CD8-positive, alpha-beta T cell (primary cell): ENCODE measurements at regions of chr18 and their contacts with region 1.

Region 1: DNA sequence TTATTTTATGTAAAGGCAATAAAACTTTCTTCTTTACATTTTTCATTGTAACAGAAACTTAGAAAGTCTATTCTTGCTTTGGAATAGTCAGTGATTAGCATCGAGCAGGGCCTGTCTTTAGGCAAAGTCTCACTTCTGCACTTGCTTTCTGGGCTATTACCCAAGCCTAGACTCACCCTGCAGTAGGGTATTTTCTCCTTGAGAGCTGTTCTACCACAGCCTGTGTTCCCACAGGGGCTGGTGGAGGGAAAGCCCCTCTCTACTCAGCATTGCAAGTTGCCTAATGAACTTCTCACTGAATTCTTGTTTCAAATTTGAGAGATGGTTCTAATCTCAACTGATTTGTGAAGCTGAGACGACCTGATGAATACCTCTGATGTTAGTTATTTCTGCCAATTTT is 111.7 kb upstream of the KLHL14 start:
- DNase-seq: peak in 1 of 9 experiments; percentile 12
- ATAC-seq: no peak
- H3K4me3 ChIP-seq: no peak overlapping the region
- H3K4me3 Mint-ChIP-seq: no peak overlapping the region
- H3K27ac ChIP-seq: no peak overlapping the region
- H3K27ac Mint-ChIP-seq: no peak overlapping the region
- H3K4me1 ChIP-seq: no peaks in the 10 kb centered on the region
- H3K4me1 Mint-ChIP-seq: no peaks in the 10 kb centered on the region
- H3K27me3 ChIP-seq: no peaks in the 10 kb centered on the region
- H3K27me3 Mint-ChIP-seq: no peaks in the 10 kb centered on the region
- CTCF ChIP-seq: no peak

Region 2: GRCh38 chr18:32937007-32937540 is 52.5 kb after region 1 on chr18:
- CTCF ChIA-PET with region 1: no interaction called
- POLR2A ChIA-PET with region 1: no interaction called
- intact Hi-C with region 1: loop called in 1 of 2 experiments (anchors 10 kb)
- DNase-seq: no peak
- ATAC-seq: no peak
- H3K4me3 ChIP-seq: no peak overlapping the region
- H3K4me3 Mint-ChIP-seq: no peak overlapping the region
- H3K27ac ChIP-seq: no peak overlapping the region
- H3K27ac Mint-ChIP-seq: no peak overlapping the region
- H3K4me1 ChIP-seq: no peaks in the 10 kb centered on the region
- H3K4me1 Mint-ChIP-seq: no peaks in the 10 kb centered on the region
- H3K27me3 ChIP-seq: no peaks in the 10 kb centered on the region
- H3K27me3 Mint-ChIP-seq: no peaks in the 10 kb centered on the region
- CTCF ChIP-seq: no peak

Region 3: DNA sequence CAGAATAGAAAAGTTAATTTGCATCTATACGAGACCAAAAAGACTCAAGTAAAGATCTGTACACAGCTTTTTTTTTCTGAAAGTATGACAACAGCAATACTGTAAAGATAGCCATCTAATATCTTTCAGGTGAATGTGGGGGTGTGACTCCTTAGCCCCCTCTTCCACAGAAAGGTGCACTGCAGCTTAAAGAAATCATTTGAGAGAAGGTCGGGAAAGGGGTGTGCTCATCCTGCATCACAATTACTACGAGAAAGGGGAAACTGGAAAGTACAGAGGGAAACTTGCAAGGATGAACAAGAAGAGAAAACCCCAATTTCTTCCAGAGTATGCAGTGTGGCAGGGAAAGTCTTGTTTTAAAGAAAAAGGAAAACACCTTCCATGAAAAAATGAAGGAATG is 300.4 kb after region 1 on chr18:
- CTCF ChIA-PET with region 1: no interaction called
- POLR2A ChIA-PET with region 1: no interaction called
- intact Hi-C with region 1: no loop called
- DNase-seq: no peak
- ATAC-seq: no peak
- H3K4me3 ChIP-seq: no peak overlapping the region
- H3K4me3 Mint-ChIP-seq: no peak overlapping the region
- H3K27ac ChIP-seq: no peak overlapping the region
- H3K27ac Mint-ChIP-seq: no peak overlapping the region
- H3K4me1 ChIP-seq: no peaks in the 10 kb centered on the region
- H3K4me1 Mint-ChIP-seq: no peaks in the 10 kb centered on the region
- H3K27me3 ChIP-seq: no peaks in the 10 kb centered on the region
- H3K27me3 Mint-ChIP-seq: no peaks in the 10 kb centered on the region
- CTCF ChIP-seq: no peak

Region 4: DNA sequence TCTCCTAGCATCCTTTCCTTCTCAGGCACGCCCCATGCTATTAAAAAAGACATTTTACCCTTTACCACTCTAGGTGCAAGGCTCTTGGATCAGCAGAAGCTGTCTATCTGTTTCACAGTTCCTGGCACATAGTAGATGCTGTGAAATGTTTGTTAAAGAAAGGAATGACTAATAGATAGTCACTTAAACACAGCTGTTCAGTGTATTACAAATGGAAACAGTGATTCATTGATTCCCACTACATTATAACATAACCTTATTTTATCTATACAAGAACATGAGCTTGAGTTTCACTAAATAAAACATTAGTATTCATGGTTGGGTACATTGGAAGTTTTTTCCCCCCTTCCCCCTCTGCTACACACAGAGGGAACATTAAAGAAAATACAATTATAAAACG is 835.6 kb after region 1 on chr18:
- CTCF ChIA-PET with region 1: no interaction called
- POLR2A ChIA-PET with region 1: no interaction called
- intact Hi-C with region 1: no loop called
- DNase-seq: no peak
- ATAC-seq: no peak
- H3K4me3 ChIP-seq: no peak overlapping the region
- H3K4me3 Mint-ChIP-seq: no peak overlapping the region
- H3K27ac ChIP-seq: no peak overlapping the region
- H3K27ac Mint-ChIP-seq: no peak overlapping the region
- H3K4me1 ChIP-seq: no peaks in the 10 kb centered on the region
- H3K4me1 Mint-ChIP-seq: no peaks in the 10 kb centered on the region
- H3K27me3 ChIP-seq: no peaks in the 10 kb centered on the region
- H3K27me3 Mint-ChIP-seq: no peaks in the 10 kb centered on the region
- CTCF ChIP-seq: no peak